IMR-90 (cell line): ENCODE measurements at regions of chr1 and their contacts with region 1.

Region 1: GRCh38 chr1:235415008-235415904 is 48.0 kb downstream of the TBCE start:
- DNase-seq: peak; percentile 85
- ATAC-seq: peak; percentile 89
- H3K4me3 ChIP-seq: no peak overlapping the region
- H3K27ac ChIP-seq: no peak overlapping the region
- H3K4me1 ChIP-seq: peaks cover 4% of the 10 kb centered on the region; the same call in 1 of the 2 replicates
- H3K27me3 ChIP-seq: no peaks in the 10 kb centered on the region
- CTCF ChIP-seq: peak; percentile 77
- POLR2A ChIP-seq: no peak
- RAD21 ChIP-seq: peak; percentile 73

Region 2: DNA sequence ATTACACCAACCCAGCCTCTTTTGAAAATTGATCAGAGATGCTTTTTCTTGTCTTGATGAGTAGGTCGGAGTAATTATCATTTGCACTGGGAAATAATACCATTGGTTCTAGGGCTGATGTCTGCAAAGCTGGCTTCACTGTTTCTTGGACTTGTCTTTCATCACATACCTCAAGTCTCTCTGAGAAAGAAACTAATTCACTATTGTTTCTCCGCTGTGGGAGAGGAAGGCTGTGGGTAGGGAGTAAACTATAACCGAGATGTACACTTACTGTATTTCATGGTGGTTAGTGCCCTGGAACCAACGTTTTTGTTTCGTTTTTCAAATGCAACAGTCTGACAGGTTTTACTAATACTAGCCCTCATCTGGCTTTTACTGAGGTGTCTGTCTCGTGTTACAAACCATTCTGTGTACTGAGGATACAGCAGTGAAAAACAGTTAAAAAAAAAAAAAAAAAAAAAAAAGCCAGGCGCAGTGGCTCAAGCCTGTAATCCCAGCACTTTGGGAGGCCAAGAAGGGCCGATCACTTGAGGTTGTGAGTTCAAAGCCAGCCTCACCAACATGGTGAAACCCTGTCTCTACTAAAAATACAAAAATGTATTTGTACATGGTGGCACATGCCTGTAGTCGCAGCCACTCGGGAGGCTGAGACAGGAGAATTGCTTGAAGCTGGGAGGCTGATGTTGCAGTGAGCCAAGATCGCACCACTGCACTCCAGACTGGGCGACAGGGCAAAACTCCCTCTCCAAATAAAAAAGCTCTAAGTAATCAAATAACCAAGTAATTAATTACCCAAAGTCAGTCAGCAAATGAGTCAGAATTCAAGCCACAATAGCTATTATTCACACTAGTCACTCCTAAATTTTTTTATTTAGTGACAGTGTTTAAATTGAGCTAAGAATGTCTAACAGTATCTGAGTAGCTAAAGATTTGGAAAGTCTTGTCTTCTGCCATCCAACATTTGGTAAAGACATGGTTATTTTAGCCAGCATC is 309.9 kb before region 1 on chr1:
- CTCF ChIA-PET with region 1: no interaction called
- POLR2A ChIA-PET with region 1: no interaction called
- dilution Hi-C with region 1: no loop called
- in situ Hi-C with region 1: loop called (anchors 10 kb)
- intact Hi-C with region 1: loop called (anchors 1 kb)
- DNase-seq: peak; percentile 32
- ATAC-seq: no peak; the same call in 1 of the 2 replicates
- H3K4me3 ChIP-seq: no peak overlapping the region
- H3K27ac ChIP-seq: no peak overlapping the region
- H3K4me1 ChIP-seq: peaks cover 4% of the 10 kb centered on the region
- H3K27me3 ChIP-seq: no peaks in the 10 kb centered on the region
- CTCF ChIP-seq: no peak
- POLR2A ChIP-seq: no peak
- RAD21 ChIP-seq: no peak

Region 3: GRCh38 chr1:235199441-235199840 is 215.8 kb before region 1 on chr1:
- CTCF ChIA-PET with region 1: interaction called, 3 read pairs
- POLR2A ChIA-PET with region 1: no interaction called
- dilution Hi-C with region 1: no loop called
- in situ Hi-C with region 1: no loop called
- intact Hi-C with region 1: loop called (anchors 5 kb)
- DNase-seq: peak; percentile 33
- ATAC-seq: 0 out of 2 replicates have a peak, but pooled peaks have one; percentile 35
- H3K4me3 ChIP-seq: no peak overlapping the region
- H3K27ac ChIP-seq: no peak overlapping the region
- H3K4me1 ChIP-seq: no peaks in the 10 kb centered on the region
- H3K27me3 ChIP-seq: no peaks in the 10 kb centered on the region
- CTCF ChIP-seq: peak; percentile 38
- POLR2A ChIP-seq: no peak
- RAD21 ChIP-seq: peak; percentile 30

Region 4: GRCh38 chr1:235253219-235253962 is 161.9 kb before region 1 on chr1:
- CTCF ChIA-PET with region 1: interaction called, 8 read pairs
- POLR2A ChIA-PET with region 1: no interaction called
- dilution Hi-C with region 1: no loop called
- in situ Hi-C with region 1: loop called (anchors 5 kb)
- intact Hi-C with region 1: loop called (anchors 1 kb)
- DNase-seq: peak; percentile 72
- ATAC-seq: peak; percentile 100
- H3K4me3 ChIP-seq: no peak overlapping the region
- H3K27ac ChIP-seq: no peak overlapping the region
- H3K4me1 ChIP-seq: no peaks in the 10 kb centered on the region; the same call in 1 of the 2 replicates
- H3K27me3 ChIP-seq: no peaks in the 10 kb centered on the region
- CTCF ChIP-seq: peak; percentile 84
- POLR2A ChIP-seq: no peak
- RAD21 ChIP-seq: peak; percentile 90

Region 5: DNA sequence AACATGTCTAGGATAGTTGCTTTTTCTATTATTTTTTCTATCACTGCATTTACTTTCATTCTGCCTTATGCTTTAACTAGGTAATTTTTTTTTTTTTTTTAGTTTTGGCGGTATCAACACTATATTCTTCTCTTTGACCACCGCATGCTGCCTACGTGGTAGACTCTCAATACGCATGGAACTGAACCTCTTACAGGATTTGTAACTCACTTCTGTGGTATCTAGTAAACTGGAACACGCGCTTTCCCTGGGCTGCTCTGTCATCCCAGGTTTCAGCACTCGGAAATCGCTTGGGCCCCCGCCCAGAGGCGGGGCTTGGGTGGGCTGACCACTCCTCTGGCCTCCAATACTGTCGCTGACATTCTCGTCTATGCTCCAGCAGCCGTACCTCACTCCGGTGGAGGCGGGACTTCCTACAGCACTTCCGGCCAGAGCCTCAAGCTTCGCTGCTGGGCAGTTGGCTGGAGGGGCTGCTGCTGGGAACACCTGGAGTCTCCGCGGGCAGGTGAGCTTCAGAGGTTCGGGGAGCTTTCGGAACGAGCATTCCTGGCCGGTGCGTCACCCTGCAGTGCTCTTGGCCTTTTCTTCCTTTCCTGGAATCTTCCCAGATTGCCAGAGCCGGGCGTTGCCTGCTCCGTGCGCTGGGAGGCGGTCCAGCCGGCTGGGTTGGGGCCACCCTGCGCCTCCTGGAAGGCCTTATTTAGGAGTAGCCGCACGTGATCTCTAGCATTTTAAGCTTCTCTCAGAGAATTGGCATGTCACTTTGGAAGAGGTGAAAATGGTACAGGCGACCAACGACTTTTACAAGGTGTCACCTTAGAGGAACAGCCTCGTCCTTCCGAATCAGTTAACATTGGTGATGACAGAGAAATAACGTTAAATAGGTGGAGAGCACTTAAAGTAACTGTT is 48.0 kb before region 1 on chr1 and contains the start of gene TBCE:
- CTCF ChIA-PET with region 1: interaction called, 3 read pairs
- POLR2A ChIA-PET with region 1: no interaction called
- dilution Hi-C with region 1: no loop called
- in situ Hi-C with region 1: no loop called
- intact Hi-C with region 1: loop called (anchors 1 kb)
- DNase-seq: peak; percentile 98
- ATAC-seq: peak; percentile 100
- H3K4me3 ChIP-seq: peak within 1 kb of the TSS; percentile 92
- H3K27ac ChIP-seq: peak within 1 kb of the TSS; percentile 84
- H3K4me1 ChIP-seq: 0 out of 2 replicates have a peak, but pooled peaks cover 2% of the 10 kb centered on the region
- H3K27me3 ChIP-seq: no peaks in the 10 kb centered on the region
- CTCF ChIP-seq: no peak
- POLR2A ChIP-seq: peak; percentile 82; the same call in 1 of the 2 replicates
- RAD21 ChIP-seq: peak; percentile 5; the same call in 1 of the 2 replicates
- total RNA-seq, gene TBCE: 26.7 and 33.1 TPM in 2 replicates

Region 6: DNA sequence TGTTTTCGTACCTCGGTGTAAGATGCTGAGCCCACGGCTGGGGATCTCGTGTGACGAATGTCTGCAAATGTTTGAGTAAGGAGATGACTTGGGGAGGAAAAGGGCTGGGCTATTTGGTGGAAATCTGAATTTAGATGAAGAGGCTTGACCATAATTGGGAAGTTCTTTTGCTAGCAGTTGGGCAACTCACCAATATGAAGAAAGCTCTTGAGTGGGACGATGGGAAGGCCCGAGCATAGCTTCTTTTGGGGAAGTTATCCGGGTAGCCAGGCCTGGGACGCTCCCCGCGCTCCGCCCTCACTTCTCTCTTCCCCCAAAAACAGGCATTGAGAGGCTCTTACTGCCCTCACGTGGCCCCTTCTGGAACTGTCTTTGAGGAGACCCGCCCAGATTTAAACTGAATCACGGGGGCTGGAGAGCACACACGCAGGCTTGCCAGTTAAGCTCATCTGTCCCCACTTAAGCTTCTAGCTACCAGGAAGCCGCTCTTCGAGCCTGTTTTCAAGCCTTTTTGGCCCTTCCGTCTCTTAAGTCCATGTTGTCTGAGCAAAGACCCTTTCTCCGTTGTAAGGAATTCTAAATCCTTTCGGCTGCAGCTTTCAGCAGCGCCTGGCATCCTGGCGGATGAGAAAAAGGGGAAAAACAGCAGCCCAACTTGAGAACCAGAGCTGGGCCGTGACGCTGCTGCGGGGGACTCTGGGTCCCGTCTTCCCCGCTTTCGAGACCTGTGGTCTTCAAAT is 556.5 kb after region 1 on chr1:
- CTCF ChIA-PET with region 1: no interaction called
- POLR2A ChIA-PET with region 1: no interaction called
- dilution Hi-C with region 1: no loop called
- in situ Hi-C with region 1: no loop called
- intact Hi-C with region 1: no loop called
- DNase-seq: peak; percentile 93
- ATAC-seq: peak; percentile 96
- H3K4me3 ChIP-seq: peak overlapping the region; percentile 40
- H3K27ac ChIP-seq: peak overlapping the region; percentile 95
- H3K4me1 ChIP-seq: peaks cover 14% of the 10 kb centered on the region
- H3K27me3 ChIP-seq: no peaks in the 10 kb centered on the region
- CTCF ChIP-seq: peak; percentile 96
- POLR2A ChIP-seq: peak; percentile 68; the same call in 1 of the 2 replicates
- RAD21 ChIP-seq: peak; percentile 97